ENCODE measurements at regions of chr1 and their contacts with region 1.

Region 1: DNA sequence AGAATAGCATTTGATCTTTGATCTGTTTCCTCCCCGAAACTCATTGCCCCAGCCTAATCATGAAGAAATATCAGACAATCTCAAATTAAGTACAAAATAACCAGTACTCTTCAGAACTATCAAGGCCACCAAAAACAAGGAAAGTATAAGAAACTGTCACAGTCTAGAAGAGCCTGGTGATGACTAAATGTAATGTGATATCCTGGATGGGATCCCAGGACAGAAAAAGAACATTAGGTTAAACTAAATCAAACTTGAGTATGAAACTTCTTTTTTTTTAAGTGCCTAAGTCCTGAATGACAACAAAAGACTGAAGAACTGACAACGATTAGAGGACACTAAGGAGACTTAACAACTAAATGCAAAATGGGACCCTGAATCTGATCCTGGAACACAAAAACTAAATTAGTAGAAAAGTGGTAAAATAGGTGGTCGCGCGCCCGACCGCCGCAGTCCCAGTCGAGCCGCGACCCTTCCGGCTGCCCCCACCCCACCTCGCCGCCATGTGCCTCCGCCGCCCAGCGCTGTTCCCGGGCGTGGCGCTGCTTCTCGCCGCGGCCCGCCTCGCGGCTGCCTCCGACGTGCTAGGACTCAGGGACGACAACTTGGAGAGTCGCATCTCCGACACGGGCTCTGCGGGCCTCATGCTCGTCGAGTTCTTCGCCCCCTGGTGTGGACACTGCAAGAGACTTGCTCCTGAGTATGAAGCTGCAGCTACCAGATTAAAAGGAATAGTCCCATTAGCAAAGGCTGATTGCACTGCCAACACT is 5.5 kb upstream of the PRKAB2 start:
- DNase-seq: no peak
- H3K4me3 ChIP-seq: peak overlapping the region; percentile 24 to 34 (median 30)
- H3K27ac ChIP-seq: peak overlapping the region in 1 of 4 donors; percentile 35
- H3K4me1 ChIP-seq: peaks cover 10 to 21% (median 19%) of the 10 kb centered on the region in 4 donors
- H3K27me3 ChIP-seq: no peaks in the 10 kb centered on the region
- CTCF ChIP-seq: no peak
- EP300 ChIP-seq: no peak
- POLR2A ChIP-seq: no peak

Region 2: GRCh38 chr1:147223740-147224615 is 46.2 kb after region 1 on chr1:
- intact Hi-C with region 1: loop called (anchors 5 kb)
- DNase-seq: no peak
- H3K4me3 ChIP-seq: no peak overlapping the region
- H3K27ac ChIP-seq: no peak overlapping the region
- H3K4me1 ChIP-seq: peaks cover 4 to 14% (median 12%) of the 10 kb centered on the region in 4 donors
- H3K27me3 ChIP-seq: no peaks in the 10 kb centered on the region
- CTCF ChIP-seq: no peak
- EP300 ChIP-seq: no peak
- POLR2A ChIP-seq: no peak